Ovary (tissue), 10 donors: ENCODE measurements at regions of chr1 and their contacts with region 1.

Region 1: DNA sequence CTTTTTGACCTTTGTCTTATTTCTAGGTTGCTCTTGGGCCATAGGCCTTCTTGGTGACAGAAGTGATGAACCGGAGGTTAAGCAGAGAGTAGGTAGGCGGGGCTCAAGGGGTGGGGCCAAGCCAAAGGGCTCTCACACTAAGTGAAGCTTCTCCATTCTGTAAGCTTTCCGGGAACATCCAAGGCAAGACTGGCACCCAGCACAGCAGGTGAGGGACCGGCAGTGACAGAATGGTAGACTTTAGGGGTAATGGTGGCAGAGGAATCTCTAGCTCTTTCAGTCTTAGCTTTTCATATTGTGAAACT is at the start of gene TNFAIP8L2:
- DNase-seq: no peak
- H3K4me3 ChIP-seq: no peak within 1 kb of the TSS
- H3K27ac ChIP-seq: no peak within 1 kb of the TSS
- H3K4me1 ChIP-seq: no peaks in the 10 kb centered on the region
- H3K27me3 ChIP-seq: no peaks in the 10 kb centered on the region
- CTCF ChIP-seq: no peak
- EP300 ChIP-seq: no peak
- POLR2A ChIP-seq: no peak
- total RNA-seq, gene TNFAIP8L2: 0.48 to 3.8 (median 1.2) TPM

Region 2: DNA sequence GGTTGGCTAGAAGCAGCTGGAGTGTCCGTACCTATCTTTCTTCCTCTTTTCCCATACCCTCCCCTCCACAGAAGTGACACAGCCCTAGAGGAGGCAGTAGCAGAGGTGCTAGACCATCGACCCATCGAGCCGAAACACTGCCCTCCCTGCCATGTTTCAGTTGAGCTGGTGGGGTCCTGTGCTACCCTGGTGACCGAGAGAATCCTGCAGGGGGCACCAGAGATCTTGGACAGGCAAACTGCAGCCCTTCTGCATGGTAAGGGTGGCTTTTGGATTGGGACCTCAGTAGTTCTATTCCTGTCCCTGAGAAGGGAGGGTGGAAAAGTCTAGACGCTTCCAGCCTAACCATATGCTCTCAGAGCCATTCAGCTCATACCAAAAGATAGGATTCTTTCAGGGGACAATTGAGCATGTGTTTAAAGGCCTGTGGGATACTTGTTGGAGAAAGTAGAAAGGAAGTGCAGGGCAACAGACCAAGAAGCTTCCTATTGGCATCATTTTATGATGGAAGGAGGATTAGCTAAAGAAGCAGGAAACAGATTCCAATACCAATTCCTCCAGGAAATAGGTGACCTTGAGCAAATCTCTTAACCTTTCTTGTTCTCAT is 131.8 kb before region 1 on chr1:
- intact Hi-C with region 1: loop called in 2 of 4 experiments (anchors 5 kb)
- DNase-seq: peak; percentile 67 to 82 (median 81)
- H3K4me3 ChIP-seq: no peak overlapping the region
- H3K27ac ChIP-seq: no peak overlapping the region
- H3K4me1 ChIP-seq: no peaks in the 10 kb centered on the region
- H3K27me3 ChIP-seq: no peaks in the 10 kb centered on the region
- CTCF ChIP-seq: peak in 2 of 3 donors; percentile 40 to 59
- EP300 ChIP-seq: no peak
- POLR2A ChIP-seq: no peak

Region 3: GRCh38 chr1:151098126-151098525 is 58.3 kb before region 1 on chr1:
- intact Hi-C with region 1: loop called (anchors 2 to 10 kb)
- DNase-seq: no peak
- H3K4me3 ChIP-seq: no peak overlapping the region
- H3K27ac ChIP-seq: no peak overlapping the region
- H3K4me1 ChIP-seq: no peaks in the 10 kb centered on the region
- H3K27me3 ChIP-seq: no peaks in the 10 kb centered on the region
- CTCF ChIP-seq: no peak
- EP300 ChIP-seq: no peak
- POLR2A ChIP-seq: no peak

Region 4: DNA sequence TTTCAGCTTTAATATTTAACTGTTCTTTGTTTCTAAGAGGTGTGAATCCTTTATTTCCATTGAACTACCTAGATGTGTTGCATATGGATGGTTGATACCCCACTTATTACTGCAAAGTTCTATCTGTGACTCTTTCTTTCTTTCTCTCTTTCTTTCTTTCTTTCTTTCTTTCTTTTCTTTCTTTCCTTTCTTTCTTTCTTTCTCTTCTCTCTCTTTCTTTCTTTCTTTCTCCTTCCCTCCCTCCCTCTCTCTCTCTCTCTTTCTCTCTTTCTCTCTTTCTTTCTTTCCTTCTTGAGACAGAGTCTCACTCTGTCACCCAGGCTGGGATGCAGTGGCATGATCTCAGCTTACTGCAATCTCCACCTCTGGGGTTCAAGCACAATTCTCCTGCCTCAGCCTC is 51.8 kb before region 1 on chr1:
- intact Hi-C with region 1: loop called (anchors 2 to 10 kb)
- DNase-seq: no peak
- H3K4me3 ChIP-seq: no peak overlapping the region
- H3K27ac ChIP-seq: no peak overlapping the region
- H3K4me1 ChIP-seq: no peaks in the 10 kb centered on the region
- H3K27me3 ChIP-seq: no peaks in the 10 kb centered on the region
- CTCF ChIP-seq: no peak
- EP300 ChIP-seq: no peak
- POLR2A ChIP-seq: no peak

Region 5: DNA sequence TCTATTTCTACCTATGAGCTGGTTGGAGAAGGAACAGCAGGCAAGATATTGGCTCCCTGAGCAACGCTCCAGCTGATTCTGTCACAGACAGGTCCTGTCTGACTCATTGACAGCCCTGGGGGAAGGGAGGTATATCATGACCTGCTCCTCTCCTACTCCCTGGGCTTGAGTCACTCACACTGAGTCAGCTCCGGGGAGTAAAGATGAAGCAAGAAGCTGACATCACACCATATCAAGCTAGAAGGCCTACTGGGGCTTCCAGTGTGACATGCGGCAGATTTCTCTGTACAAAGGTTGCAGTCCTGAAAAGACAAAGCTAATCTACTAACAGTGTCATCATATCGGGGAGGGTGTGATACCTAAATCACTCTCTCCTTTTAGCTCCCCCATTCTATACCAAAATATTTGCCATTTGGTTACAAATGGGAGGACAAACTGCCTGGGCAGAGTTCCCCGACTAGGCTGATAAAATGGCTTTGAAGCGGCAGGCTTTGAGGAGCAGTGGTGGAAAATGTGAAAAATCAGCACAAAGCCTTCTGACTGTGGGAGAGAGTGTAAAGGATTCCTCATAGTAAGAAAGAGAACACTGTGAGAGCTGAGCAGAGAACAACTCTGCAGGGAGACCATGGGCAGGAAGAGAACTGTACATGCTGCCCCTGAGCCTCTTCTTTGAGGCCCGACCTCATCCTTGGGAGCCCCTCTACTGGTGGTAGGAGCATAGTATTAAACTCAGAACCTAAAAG is 155.3 kb after region 1 on chr1:
- intact Hi-C with region 1: no loop called
- DNase-seq: peak; percentile 62 to 91 (median 75)
- H3K4me3 ChIP-seq: no peak overlapping the region
- H3K27ac ChIP-seq: peak overlapping the region; percentile 49 to 69
- H3K4me1 ChIP-seq: peaks cover 29% of the 10 kb centered on the region
- H3K27me3 ChIP-seq: no peaks in the 10 kb centered on the region
- CTCF ChIP-seq: no peak
- EP300 ChIP-seq: peak; percentile 39
- POLR2A ChIP-seq: peak; percentile 22

Region 6: DNA sequence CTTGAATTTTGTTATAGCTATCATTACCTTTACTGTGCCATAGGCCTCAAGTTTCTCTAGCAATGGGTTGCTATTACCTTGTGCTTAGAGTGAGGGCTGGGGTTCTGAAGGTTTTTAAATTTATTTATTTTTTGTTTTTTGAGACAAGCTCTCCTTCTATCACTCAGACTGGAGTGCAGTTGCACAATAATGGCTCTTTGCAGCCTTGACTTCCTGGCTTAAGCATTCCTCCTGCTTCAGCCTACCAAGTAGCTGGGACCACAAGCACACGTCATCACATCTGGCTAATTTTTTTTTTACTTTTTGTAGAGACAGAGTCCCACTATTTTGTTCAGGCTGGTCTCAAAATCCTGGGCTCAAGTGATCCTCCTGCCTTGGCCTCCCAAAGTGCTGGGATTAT is 496.9 kb after region 1 on chr1:
- intact Hi-C with region 1: no loop called
- DNase-seq: no peak
- H3K4me3 ChIP-seq: no peak overlapping the region
- H3K27ac ChIP-seq: no peak overlapping the region
- H3K4me1 ChIP-seq: no peaks in the 10 kb centered on the region
- H3K27me3 ChIP-seq: no peaks in the 10 kb centered on the region
- CTCF ChIP-seq: no peak
- EP300 ChIP-seq: no peak
- POLR2A ChIP-seq: no peak